Right ventricle myocardium inferior (tissue), 1 donor: ENCODE measurements at regions of chr2 and their contacts with region 1.

Region 1: DNA sequence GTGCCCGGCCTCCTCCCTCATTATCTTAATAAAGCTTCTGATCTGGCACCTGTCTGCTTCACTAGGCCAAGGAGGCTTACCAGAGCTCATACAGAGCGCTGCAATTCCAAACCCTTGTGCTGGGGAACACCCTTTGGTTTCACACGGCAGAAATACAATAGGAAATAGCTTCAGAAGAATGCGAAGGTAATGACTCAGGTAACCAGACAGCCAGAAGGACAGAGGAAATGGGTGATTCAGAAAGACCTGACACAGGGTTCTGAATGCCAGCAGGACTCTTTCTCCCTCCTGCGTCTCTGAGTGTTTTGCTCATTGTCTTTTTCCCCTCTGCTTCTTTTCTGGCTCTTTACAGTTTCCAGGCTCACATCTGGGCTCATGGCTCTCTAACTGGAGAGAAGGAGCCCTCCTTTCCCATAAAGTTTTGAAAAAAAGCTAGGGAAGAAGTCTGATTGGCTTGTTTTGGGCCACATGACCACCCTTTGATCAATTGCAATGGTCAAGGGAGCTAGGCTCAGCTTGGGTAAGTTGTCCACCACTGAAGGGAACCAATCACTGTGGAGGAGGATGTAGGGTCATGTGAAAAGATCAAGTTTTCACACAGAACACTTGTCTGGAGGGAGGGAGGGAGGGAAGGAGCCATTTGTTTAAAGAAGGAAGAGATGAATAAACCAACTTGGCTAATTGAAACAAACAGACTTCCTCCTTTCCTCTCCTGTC is 90.5 kb upstream of the UPP2 start:
- DNase-seq: no peak
- ATAC-seq: no peak

Region 2: DNA sequence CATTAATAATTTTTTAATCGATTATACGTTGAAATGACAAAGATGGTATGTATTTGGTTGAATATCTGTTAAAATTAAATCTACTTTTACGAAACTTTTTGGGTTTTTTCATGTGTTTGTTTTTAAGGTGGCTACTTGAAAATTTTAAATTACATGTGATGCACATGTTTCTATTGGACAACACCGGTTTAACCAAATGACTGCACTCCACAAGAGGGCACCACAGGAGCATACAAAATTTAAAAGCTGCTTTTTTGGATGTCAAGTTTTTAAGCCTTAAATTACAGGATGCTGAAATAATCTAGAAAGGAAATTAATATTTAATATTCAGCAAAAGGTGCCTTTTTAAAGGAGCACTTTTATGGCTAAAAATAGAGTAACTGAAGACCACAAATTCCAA is 233.8 kb before region 1 on chr2:
- intact Hi-C with region 1: loop called (anchors 2 kb)
- DNase-seq: no peak
- ATAC-seq: no peak

Region 3: DNA sequence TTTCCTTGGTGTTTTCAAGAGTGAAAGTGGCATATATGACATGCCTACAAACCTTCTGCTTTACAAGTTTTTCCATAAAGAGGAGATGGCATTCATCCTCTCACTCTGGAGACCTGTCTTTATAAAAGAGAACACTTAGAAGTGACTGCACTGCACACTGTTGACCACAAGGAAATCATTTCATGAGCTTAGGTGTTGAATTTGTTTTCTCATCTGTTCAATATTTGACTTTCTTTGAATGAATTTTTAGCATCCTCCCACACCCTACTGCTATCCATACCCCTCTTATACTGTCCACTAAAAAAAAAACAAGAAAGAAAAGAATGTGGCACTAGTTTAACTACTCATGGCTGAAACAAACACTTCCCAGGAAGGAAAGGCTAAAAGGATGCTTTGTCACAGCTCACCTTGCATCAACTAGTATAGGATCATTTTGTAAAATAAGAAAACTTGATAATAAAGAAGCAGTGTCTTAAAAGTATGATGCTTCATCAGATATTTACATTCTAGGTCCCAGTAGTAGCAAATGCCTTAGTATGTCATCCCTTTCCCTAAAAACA is 218.1 kb before region 1 on chr2:
- intact Hi-C with region 1: no loop called
- DNase-seq: no peak
- ATAC-seq: no peak

Region 4: DNA sequence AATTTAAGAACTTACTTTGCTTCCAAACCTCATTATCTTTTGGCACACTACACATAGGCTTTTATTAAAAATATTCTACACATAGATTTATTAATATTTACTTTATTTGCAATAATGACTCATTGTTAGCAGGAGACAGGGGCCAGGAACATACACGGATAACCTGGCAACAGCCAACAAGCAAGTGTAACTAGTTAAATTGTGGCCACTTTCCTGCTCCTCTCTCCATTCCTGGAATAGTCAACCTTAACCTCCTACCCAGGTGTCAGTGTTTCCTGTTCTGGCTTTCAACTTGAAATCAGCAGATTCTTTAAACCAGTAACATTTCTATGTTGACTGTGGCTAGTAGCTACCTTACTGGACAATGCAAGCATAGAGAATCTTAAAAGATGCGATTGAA is 161.6 kb before region 1 on chr2:
- intact Hi-C with region 1: no loop called
- DNase-seq: no peak
- ATAC-seq: no peak